Ascending aorta (tissue), 2 donors: ENCODE measurements at regions of chr1 and their contacts with region 1.

Region 1: GRCh38 chr1:171984850-171985485 is 143.7 kb downstream of the DNM3 start:
- DNase-seq: no peak
- H3K4me3 ChIP-seq: no peak overlapping the region
- H3K27ac ChIP-seq: no peak overlapping the region
- H3K4me1 ChIP-seq: no peaks in the 10 kb centered on the region
- H3K27me3 ChIP-seq: no peaks in the 10 kb centered on the region
- CTCF ChIP-seq: peak; percentile 48 to 76 (median 67)

Region 2: DNA sequence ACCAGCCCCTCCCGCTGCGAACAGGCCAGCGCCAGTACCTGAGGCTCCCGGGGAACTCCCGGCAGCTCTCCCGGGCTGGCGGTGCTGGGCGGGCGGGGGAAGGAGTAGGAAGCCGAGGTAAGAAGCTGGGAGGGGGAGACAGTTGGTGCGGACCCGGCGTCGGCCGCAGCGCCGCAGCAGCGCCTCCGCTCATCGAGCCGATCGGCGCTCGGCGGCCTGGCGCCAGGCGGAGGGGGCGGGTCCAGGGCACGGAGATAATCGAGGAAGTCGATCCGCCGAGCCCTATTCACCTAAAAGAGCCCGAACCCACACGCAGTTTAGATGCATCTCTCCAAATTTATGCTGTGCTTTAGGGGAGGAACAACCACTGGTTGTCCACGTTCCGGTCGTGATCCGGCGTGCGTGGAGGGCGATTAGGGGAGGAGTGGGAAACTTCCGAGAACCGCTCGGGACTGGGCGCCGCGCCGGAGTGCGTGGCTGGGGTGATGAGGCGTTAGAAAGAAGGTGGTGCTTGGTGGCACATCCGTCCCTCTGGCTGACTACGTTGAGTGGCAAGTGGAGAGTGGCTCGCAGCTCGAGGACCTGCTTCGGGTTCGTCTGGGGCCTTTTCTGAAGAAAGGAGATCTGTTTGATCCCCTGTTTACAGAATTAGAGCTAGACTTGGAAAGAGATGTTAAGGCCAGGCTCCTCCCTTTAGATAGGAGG is 242.9 kb before region 1 on chr1 and contains the start of gene VAMP4:
- intact Hi-C with region 1: no loop called
- DNase-seq: peak; percentile 51 to 94
- H3K4me3 ChIP-seq: peak within 1 kb of the TSS; percentile 90 to 96
- H3K27ac ChIP-seq: peak within 1 kb of the TSS; percentile 95 to 97
- H3K4me1 ChIP-seq: peaks cover 9 to 41% of the 10 kb centered on the region in 2 donors
- H3K27me3 ChIP-seq: no peaks in the 10 kb centered on the region
- CTCF ChIP-seq: no peak
- total RNA-seq, gene VAMP4: 3.6 TPM

Region 3: DNA sequence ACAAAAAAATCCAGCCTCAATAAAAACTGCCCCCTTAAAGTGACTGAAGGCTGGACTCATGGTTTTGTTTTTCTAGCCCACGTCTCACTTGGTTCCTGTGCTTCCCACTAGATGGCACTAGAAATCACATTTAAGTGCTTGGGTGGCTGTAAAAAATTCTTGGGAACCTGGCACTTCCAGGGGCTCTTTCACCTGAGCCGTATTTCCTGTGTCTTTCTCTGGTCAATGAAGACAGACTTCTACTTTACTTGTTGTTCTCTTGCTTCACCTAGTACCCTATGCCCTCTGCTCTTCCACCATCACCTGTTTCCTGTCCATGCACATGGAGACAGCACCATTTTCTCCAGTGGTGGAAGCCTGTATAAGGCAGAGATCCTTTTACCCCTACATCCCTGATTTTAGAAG is 183.5 kb before region 1 on chr1:
- intact Hi-C with region 1: loop called (anchors 1 kb)
- DNase-seq: no peak
- H3K4me3 ChIP-seq: no peak overlapping the region
- H3K27ac ChIP-seq: no peak overlapping the region
- H3K4me1 ChIP-seq: no peaks in the 10 kb centered on the region
- H3K27me3 ChIP-seq: no peaks in the 10 kb centered on the region
- CTCF ChIP-seq: peak; percentile 56 to 82 (median 80)

Region 4: GRCh38 chr1:171940373-171940772 is 44.6 kb before region 1 on chr1:
- intact Hi-C with region 1: no loop called
- DNase-seq: no peak
- H3K4me3 ChIP-seq: no peak overlapping the region
- H3K27ac ChIP-seq: no peak overlapping the region
- H3K4me1 ChIP-seq: no peaks in the 10 kb centered on the region
- H3K27me3 ChIP-seq: no peaks in the 10 kb centered on the region
- CTCF ChIP-seq: no peak